HEK293 (cell line): ENCODE measurements at regions of chr10 and their contacts with region 1.

Region 1: GRCh38 chr10:96229568-96230030 is 41.8 kb downstream of the BLNK start:
- H3K4me3 ChIP-seq: no peak overlapping the region
- H3K27ac ChIP-seq: no peak overlapping the region
- H3K4me1 ChIP-seq: no peaks in the 10 kb centered on the region
- CTCF ChIP-seq: peak; percentile 99

Region 2: DNA sequence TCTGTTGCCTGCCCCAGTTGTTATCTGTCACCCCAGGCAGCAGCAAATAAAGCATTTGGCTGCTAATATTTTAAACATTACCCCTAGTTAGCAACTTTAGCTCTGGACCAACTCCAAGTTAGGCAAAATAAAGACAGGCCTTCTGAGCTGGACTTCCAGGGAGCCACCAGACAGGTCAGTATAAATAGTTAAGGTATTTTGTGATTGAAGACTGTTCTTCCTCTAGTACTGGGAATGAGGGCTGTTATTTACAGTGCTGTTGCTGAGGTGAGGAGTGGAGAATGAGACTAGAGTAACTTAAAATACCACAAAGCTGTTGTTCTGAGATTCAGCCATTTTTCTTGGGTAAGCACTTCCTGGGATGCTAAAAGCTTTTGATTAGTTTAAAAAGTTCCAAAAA is 59.4 kb before region 1 on chr10:
- CTCF ChIA-PET with region 1: interaction called, 11 read pairs
- POLR2A ChIA-PET with region 1: no interaction called
- H3K4me3 ChIP-seq: no peak overlapping the region
- H3K27ac ChIP-seq: no peak overlapping the region
- H3K4me1 ChIP-seq: no peaks in the 10 kb centered on the region
- CTCF ChIP-seq: no peak

Region 3: DNA sequence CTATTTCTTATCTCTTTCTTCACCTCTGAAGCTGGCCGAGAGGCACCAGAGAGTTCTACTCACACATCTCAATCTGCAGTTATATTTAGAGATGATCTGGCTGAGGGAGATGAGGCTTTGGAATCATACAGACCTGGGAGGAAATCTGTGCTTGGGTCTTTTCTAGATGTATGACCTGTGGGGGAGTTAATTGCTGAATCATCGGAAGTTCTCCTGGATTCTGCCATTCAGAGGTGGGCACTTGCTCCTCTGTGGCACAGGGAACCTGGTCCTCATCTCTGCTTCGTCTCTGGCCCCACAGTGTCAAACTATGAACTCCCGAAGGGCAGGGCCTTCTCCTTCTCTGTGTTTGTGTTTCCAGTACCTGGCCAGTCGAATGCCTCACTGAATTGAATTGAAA is 10.8 kb before region 1 on chr10:
- CTCF ChIA-PET with region 1: interaction called, 11 read pairs
- POLR2A ChIA-PET with region 1: no interaction called
- H3K4me3 ChIP-seq: no peak overlapping the region
- H3K27ac ChIP-seq: no peak overlapping the region
- H3K4me1 ChIP-seq: no peaks in the 10 kb centered on the region
- CTCF ChIP-seq: no peak

Region 4: DNA sequence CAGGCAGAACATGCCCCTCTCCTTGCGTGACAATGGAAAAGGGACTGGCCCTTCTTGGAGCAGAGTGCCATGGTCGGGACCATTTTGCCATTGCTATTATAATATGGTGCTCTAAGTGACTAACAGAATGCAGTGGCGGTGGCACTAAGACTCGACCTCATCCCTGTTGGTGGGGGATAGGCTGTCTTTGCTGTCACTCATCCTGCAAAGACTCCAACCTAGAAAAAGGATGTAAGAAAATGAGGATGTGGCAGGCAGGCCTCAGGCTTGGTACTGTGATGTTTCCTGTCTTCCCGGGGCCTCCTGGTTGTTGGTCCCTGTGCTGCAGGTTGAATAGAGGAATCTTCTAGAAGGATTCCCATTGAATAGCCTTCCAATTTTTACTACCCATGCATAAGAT is 23.1 kb after region 1 on chr10:
- CTCF ChIA-PET with region 1: interaction called, 17 read pairs
- POLR2A ChIA-PET with region 1: interaction called, 3 read pairs
- H3K4me3 ChIP-seq: no peak overlapping the region
- H3K27ac ChIP-seq: no peak overlapping the region
- H3K4me1 ChIP-seq: no peaks in the 10 kb centered on the region
- CTCF ChIP-seq: no peak

Region 5: DNA sequence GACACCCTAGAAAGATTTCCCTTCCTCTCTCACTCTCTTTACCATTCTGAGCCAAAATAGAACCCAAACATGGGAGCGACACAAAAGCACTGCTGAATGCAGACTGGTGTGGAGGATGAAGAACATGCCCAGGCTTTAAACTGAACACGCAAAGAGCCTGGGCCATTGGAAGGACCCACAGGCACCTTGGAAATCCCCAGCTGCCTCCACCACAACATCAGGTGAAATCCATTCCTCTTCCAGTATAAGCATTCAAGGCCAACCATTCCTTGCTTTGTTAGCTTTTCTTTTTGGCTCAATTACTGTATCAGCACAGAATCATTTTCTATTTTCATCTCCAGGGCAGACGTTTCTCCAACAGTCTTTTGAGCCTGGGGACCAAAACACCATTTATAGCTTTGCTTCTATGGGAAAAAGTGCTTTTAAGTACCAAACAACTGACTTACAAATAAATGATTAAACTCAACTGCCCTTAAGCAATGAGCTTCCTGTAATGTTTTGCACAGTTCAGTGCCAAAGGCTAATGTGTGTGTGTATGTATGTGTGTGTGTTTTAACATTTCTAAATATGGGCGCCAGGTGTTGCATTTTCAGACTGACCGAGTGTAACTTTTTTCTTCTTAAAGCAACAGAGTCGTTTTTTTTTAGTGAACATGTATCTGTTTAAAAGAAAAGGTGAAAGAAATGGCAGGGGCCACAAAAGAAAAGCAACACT is 58.0 kb after region 1 on chr10:
- CTCF ChIA-PET with region 1: interaction called, 131 read pairs
- POLR2A ChIA-PET with region 1: no interaction called
- H3K4me3 ChIP-seq: no peak overlapping the region
- H3K27ac ChIP-seq: no peak overlapping the region
- H3K4me1 ChIP-seq: no peaks in the 10 kb centered on the region; the same call in 1 of the 2 replicates
- CTCF ChIP-seq: no peak

Region 6: DNA sequence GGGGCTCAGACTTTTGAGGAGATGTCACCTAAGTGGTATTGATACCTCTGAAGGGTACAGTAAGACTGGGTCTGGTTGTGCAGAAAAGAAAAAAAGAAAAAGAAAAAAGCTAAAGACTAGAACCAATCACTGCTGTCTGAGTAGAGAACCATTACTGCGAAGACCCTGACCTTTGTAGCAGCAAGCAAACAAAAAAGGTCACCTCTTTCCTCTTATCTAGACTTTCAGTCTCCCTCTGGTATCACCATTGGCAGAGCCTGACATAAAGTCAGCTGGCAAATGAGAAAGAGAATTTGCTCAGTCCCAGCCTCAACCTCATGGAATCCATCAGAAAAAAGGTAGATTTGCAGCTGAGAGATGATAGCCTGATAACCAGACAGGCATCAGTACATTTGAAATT is 72.0 kb after region 1 on chr10:
- CTCF ChIA-PET with region 1: interaction called, 131 read pairs
- POLR2A ChIA-PET with region 1: no interaction called
- H3K4me3 ChIP-seq: no peak overlapping the region
- H3K27ac ChIP-seq: no peak overlapping the region
- H3K4me1 ChIP-seq: no peaks in the 10 kb centered on the region
- CTCF ChIP-seq: no peak

Region 7: GRCh38 chr10:96339957-96340904 is 110.6 kb after region 1 on chr10:
- CTCF ChIA-PET with region 1: interaction called, 32 read pairs
- POLR2A ChIA-PET with region 1: no interaction called
- H3K4me3 ChIP-seq: no peak overlapping the region
- H3K27ac ChIP-seq: no peak overlapping the region
- H3K4me1 ChIP-seq: no peaks in the 10 kb centered on the region
- CTCF ChIP-seq: peak; percentile 52; the same call in 1 of the 2 replicates